Gastrocnemius medialis (tissue), 4 donors: ENCODE measurements at regions of chr6 and their contacts with region 1.

Region 1: GRCh38 chr6:108492131-108492766 is 68.5 kb upstream of the FOXO3 start:
- DNase-seq: no peak
- ATAC-seq: peak; percentile 47 to 80
- H3K4me3 ChIP-seq: no peak overlapping the region
- H3K27ac ChIP-seq: no peak overlapping the region
- H3K4me1 ChIP-seq: peaks cover 0 to 7% of the 10 kb centered on the region in 2 donors
- H3K27me3 ChIP-seq: no peaks in the 10 kb centered on the region
- CTCF ChIP-seq: peak; percentile 24 to 61 (median 31)
- POLR2A ChIP-seq: no peak

Region 2: DNA sequence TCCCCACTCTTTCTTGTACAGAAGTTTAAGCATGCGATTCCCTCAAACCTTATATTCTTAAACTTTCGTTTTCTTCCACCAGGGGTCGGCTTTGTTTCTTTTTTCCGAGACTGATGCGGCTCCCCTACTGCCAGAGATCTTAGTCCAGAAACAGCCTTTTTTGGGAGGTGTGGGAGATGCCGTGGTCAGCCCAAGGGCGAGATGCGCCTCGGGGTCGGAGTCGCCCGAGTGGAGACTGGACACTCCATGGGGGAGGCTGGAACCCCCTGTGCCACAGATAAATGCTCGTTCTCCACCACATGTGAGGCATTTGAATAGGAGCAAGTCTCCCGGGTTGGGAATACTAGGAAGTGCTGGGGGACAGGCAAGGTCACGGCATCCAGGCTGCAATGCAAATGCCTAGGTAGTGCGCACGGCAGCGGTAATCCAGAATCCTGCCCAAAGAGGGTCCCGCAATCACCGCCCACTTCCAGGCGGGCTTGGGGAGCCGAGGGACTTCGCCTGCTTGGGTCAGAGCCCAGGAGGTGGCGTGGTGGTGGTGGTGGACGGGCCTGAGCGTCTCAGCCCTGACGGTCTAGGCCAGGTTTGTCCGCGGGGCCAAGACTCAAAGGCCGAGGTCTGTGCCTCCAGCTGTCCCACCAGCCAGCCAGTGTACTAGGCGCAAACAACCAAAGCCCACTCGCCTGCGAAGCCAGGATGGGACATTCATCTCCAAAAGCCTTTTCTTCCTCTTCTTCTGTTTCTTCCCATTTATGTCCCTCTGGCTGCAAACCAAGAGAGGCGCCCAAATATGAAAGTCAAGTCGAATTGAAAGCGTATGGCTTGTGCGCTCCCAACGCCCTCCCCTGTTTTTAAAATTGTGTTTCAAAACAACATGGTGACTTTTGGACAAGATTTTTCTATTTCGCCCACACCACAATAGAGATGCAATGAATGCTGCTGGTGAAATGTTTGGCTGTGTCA is 378.4 kb before region 1 on chr6:
- in situ Hi-C with region 1: loop called in 3 of 4 experiments (anchors 10 to 25 kb)
- intact Hi-C with region 1: loop called (anchors 2 kb)
- DNase-seq: no peak
- ATAC-seq: no peak
- H3K4me3 ChIP-seq: peak overlapping the region in 2 of 4 donors; percentile 16 to 40
- H3K27ac ChIP-seq: no peak overlapping the region
- H3K4me1 ChIP-seq: peaks cover 24 to 26% of the 10 kb centered on the region in 2 donors
- H3K27me3 ChIP-seq: peaks cover 51 to 73% (median 70%) of the 10 kb centered on the region in 3 donors
- CTCF ChIP-seq: peak; percentile 13 to 47 (median 35)
- POLR2A ChIP-seq: no peak

Region 3: DNA sequence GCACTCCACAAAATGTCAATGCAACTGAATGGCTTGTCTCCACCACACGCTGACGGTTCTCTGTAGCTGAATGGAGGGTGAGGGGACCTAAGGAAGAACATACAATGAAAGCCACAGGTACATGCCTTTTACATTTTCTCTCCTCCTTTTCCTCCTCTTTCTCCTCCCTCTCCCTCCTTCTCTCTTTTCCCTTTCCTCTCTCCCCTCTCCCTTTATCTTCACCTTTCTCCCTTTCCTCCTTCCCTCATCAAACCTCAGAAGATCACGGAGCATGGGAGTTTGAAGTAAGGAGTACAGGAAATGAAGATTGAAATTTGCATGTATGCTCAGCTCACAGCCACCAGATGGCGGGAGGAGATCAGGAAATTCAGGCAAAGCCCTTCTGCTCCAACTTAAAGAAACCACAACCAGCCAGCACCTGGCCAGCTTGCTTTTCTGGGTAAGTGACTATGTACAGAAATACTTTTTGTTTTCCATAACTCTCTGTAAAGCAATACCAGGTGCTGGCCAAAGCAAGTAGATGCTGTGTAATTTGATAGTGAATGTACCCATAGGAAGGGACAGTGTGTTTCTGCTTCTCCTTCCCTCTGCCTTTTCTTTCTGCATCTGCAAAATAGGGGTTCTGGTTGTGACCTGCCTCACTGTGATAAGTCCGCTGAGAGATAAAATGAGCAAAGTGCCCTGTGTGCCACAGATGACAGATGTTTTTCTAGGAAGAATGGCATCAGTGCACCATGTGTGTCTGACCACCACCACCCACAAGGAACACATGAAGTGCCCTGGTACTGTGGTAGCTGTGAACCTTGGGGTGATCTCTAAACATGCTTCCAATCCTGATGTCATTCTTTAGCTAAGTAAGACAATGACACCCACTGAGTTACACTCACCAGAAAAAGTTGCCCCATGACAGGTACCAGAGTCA is 49.9 kb after region 1 on chr6:
- in situ Hi-C with region 1: no loop called
- intact Hi-C with region 1: no loop called
- DNase-seq: peak; percentile 76 to 86
- ATAC-seq: peak; percentile 90 to 94
- H3K4me3 ChIP-seq: no peak overlapping the region
- H3K27ac ChIP-seq: peak overlapping the region; percentile 54 to 86 (median 75)
- H3K4me1 ChIP-seq: peaks cover 26 to 29% of the 10 kb centered on the region in 2 donors
- H3K27me3 ChIP-seq: no peaks in the 10 kb centered on the region
- CTCF ChIP-seq: peak; percentile 80 to 95 (median 89)
- POLR2A ChIP-seq: no peak

Region 4: DNA sequence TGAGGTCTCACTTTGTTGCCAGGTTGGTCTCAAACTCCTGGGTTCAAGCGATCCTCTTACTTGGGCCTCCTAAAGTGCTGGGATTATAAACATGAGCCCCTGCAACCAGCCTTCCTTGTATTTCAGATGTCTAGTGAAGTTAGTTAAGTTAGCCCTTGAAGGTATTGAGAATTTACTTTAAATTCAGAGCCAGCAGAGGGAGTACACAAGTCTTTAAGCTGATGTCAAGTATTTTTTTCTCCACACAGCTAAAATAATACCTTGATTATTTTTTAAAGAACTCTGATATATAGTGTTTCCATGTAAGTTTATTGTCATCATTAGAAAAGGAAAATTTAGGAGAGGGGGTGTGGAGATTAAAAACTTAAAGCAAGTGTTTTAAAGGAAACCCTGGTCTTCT is 78.3 kb after region 1 on chr6:
- in situ Hi-C with region 1: no loop called
- intact Hi-C with region 1: no loop called
- DNase-seq: no peak
- ATAC-seq: no peak
- H3K4me3 ChIP-seq: no peak overlapping the region
- H3K27ac ChIP-seq: peak overlapping the region; percentile 6 to 47 (median 44)
- H3K4me1 ChIP-seq: peaks cover 79 to 87% of the 10 kb centered on the region in 2 donors
- H3K27me3 ChIP-seq: no peaks in the 10 kb centered on the region
- CTCF ChIP-seq: no peak
- POLR2A ChIP-seq: no peak

Region 5: DNA sequence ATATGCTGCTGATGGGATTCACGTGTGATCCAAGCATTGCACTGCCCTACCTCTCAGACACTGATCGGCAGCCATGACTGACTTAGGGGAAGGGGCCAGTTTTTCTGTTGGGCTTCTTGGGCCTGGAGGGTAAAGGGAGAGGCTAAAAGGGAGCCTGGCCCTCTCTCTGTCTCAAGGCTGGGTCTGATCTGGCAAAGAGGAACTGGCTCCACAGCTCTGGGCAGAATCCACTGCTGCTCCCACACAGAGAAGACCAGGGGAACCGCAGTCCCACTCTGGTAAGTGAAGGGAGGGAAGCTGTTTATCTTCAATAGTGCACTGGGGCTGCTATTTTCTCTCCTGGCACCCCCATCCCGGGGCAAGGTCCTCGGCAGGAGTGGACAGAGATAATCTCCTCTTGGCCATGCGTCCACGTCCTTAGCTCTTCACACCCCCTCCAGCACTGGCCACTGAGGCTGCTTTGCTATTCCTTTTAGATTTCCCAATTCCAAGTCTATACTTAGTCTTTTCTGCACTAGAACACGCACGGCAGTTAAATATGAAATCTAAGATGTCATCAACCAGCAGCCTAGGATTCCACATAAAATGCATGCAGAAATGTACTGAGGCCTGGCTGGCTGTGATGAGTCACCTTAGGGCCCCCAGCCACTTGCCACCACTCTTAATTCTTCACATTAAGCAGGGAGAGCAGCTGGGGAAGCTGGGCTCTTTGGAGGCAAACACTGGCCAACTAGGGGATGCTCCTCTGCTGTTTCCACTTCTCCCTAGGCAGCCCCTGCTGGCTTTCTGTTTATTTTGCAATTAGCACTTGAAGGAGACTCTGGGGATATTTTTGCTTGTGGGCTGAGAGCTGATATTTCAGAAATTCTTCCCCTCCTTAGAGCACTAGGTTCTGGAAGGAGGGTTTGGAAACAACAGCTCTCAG is 268.1 kb after region 1 on chr6:
- in situ Hi-C with region 1: no loop called
- intact Hi-C with region 1: no loop called
- DNase-seq: no peak
- ATAC-seq: peak; percentile 23 to 42
- H3K4me3 ChIP-seq: no peak overlapping the region
- H3K27ac ChIP-seq: peak overlapping the region in 2 of 4 donors; percentile 6 to 38
- H3K4me1 ChIP-seq: peaks cover 11 to 28% of the 10 kb centered on the region in 2 donors
- H3K27me3 ChIP-seq: no peaks in the 10 kb centered on the region
- CTCF ChIP-seq: no peak
- POLR2A ChIP-seq: no peak